ENCODE measurements at regions of chrX and their contacts with region 1.

Region 1: DNA sequence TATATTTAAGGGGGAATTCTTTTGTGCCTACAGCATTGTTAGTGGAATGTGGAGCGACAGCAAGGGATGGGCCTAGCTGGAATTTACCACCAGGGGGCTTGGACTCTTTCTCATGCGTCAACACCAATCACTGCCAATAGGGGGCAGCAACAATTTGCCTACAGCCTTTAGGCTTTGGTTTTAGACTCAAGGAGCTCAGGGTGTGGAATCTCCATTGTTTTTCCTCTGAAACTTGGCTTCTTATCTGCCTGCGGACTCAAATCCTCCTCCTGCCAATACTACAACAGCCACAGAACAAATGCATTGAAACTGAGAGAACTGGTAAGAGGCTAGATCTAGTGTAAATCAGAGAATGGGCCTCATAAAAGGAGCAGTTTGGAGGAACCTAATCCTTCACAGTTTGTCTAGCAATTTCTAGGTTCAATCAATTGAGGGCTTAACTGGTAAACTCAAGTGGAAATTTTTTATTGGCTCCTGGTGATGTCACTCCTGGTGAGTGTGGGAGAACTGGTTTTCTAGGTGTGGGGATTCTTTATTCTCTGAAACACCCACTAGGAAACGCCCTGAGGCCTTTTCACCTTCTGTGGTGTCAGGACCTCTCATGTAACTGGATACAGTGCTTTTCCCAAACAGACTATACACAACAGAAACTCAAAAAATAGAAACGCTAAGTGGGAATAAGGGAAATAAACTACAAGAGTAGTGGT is 27.9 kb upstream of the TMSB4X start:
- DNase-seq: peak; percentile 69 to 85 (median 79)
- H3K4me3 ChIP-seq: no peak overlapping the region
- H3K4me3 Mint-ChIP-seq: peak overlapping the region in 7 of 8 donors; percentile 41 to 76 (median 64)
- H3K27ac ChIP-seq: peak overlapping the region; percentile 84
- H3K27ac Mint-ChIP-seq: peak overlapping the region; percentile 91 to 99 (median 97)
- H3K4me1 ChIP-seq: peaks cover 49% of the 10 kb centered on the region
- H3K4me1 Mint-ChIP-seq: peaks cover 37 to 58% (median 50%) of the 10 kb centered on the region in 4 donors
- H3K27me3 ChIP-seq: no peaks in the 10 kb centered on the region
- H3K27me3 Mint-ChIP-seq: no peaks in the 10 kb centered on the region

Region 2: DNA sequence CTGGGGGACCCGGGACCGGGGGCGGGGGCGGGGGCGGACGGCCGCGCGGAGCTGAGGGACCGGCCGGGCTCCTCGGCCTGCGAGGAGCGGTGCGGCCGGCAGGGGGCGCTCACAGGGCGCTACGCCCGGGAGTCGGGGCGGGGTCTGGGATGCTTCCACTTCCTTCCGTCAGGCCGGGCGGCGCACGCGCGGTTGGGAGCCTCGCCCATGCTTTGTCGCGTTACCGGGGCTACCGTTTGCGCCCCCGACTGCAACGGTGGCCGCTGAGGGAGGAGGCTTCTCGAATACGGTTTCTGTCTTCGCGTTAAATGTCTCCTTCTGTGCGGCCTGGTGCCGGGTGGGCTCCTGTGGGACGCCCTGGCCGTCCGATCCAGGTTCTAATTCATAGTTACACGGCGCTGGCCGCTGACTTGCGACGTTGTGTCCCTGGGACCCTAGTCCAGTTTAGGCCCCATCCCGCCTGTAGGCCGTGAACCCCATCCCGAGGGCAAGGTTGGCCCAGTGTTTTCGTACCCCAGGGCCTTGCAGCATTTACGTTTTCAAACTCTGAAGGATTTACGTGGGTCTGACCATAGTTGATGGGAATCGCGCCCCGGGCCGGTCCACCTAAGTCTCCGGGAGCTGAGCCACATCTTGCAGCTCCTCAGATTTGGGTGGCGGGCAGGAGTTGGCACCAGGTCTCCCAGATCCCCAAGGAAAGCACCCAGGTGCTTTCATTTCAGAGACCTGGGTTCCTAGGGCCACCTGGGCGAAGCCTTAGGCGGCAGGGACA is 1188.4 kb before region 1 on chrX:
- CTCF ChIA-PET with region 1: no interaction called
- POLR2A ChIA-PET with region 1: no interaction called
- intact Hi-C with region 1: loop called (anchors 5 kb)
- DNase-seq: peak; percentile 87 to 90 (median 89)
- H3K4me3 ChIP-seq: peak overlapping the region; percentile 56 to 58
- H3K4me3 Mint-ChIP-seq: peak overlapping the region; percentile 88 to 98 (median 94)
- H3K27ac ChIP-seq: peak overlapping the region; percentile 76
- H3K27ac Mint-ChIP-seq: peak overlapping the region; percentile 91 to 99 (median 95)
- H3K4me1 ChIP-seq: peaks cover 29% of the 10 kb centered on the region
- H3K4me1 Mint-ChIP-seq: peaks cover 14 to 46% (median 29%) of the 10 kb centered on the region in 4 donors
- H3K27me3 ChIP-seq: no peaks in the 10 kb centered on the region
- H3K27me3 Mint-ChIP-seq: no peaks in the 10 kb centered on the region

Region 3: DNA sequence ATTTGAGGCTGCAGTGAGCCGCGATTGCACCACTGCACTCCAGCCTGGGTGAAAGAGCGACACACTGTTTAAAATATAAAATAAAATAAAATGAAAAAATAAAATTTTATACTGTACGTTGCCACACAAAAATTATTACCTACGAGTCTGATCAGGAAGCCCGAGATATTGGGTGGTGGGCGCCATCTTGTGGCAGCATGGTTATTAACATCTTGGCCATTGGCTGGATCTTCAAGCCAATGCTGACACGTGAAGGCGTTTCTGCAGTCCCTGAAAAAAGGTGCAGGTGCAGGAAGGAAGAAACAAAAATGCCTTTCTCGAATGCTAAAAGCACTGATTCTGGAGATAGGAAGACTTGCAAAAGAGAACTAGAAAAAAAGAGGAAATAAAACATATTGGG is 45.5 kb before region 1 on chrX:
- CTCF ChIA-PET with region 1: no interaction called
- POLR2A ChIA-PET with region 1: no interaction called
- intact Hi-C with region 1: no loop called
- DNase-seq: peak; percentile 49 to 61 (median 54)
- H3K4me3 ChIP-seq: no peak overlapping the region
- H3K4me3 Mint-ChIP-seq: peak overlapping the region in 1 of 8 donors; percentile 57
- H3K27ac ChIP-seq: no peak overlapping the region
- H3K27ac Mint-ChIP-seq: no peak overlapping the region
- H3K4me1 ChIP-seq: no peaks in the 10 kb centered on the region
- H3K4me1 Mint-ChIP-seq: peaks cover 0 to 4% (median 2%) of the 10 kb centered on the region in 4 donors
- H3K27me3 ChIP-seq: no peaks in the 10 kb centered on the region
- H3K27me3 Mint-ChIP-seq: peaks cover 0 to 2% of the 10 kb centered on the region in 2 donors

Region 4: DNA sequence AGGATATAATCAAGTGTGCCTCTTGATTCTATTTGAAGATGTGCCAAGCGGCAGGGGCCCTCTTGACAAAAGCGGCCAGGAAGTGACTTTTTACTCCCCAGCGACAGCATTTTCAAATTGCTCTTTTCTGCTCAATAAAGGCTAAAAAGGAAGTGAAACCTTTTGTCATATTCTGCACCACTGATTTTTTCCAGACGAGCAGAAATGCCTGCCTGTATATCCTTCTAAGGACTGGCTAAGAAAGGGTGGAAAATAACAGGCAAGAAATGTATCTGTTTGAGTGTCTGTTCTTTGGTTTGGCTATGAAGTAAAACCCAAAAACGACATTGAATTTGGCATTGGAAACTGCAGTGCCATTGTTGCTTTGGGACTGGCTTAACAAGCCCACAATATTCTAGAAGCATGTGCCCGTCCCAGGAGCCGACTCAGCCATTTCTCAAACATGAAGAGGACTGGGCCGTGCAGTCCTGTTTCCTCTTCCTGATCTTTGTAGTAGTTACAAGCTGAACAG is 53.4 kb after region 1 on chrX:
- CTCF ChIA-PET with region 1: interaction called, 9 read pairs
- POLR2A ChIA-PET with region 1: interaction called, 23 read pairs
- intact Hi-C with region 1: loop called (anchors 2 kb)
- DNase-seq: peak; percentile 55 to 68 (median 59)
- H3K4me3 ChIP-seq: no peak overlapping the region
- H3K4me3 Mint-ChIP-seq: peak overlapping the region; percentile 71 to 88 (median 78)
- H3K27ac ChIP-seq: peak overlapping the region; percentile 72
- H3K27ac Mint-ChIP-seq: peak overlapping the region; percentile 91 to 98 (median 94)
- H3K4me1 ChIP-seq: peaks cover 91% of the 10 kb centered on the region
- H3K4me1 Mint-ChIP-seq: peaks cover 45 to 84% (median 69%) of the 10 kb centered on the region in 4 donors
- H3K27me3 ChIP-seq: no peaks in the 10 kb centered on the region
- H3K27me3 Mint-ChIP-seq: no peaks in the 10 kb centered on the region

Region 5: GRCh38 chrX:13029341-13029740 is 82.3 kb after region 1 on chrX:
- CTCF ChIA-PET with region 1: interaction called, 3 read pairs
- POLR2A ChIA-PET with region 1: interaction called, 13 read pairs
- intact Hi-C with region 1: loop called (anchors 1 kb)
- DNase-seq: no peak
- H3K4me3 ChIP-seq: no peak overlapping the region
- H3K4me3 Mint-ChIP-seq: peak overlapping the region; percentile 33 to 79 (median 65)
- H3K27ac ChIP-seq: peak overlapping the region; percentile 42
- H3K27ac Mint-ChIP-seq: peak overlapping the region; percentile 74 to 94 (median 90)
- H3K4me1 ChIP-seq: peaks cover 72% of the 10 kb centered on the region
- H3K4me1 Mint-ChIP-seq: peaks cover 45 to 76% (median 61%) of the 10 kb centered on the region in 4 donors
- H3K27me3 ChIP-seq: no peaks in the 10 kb centered on the region
- H3K27me3 Mint-ChIP-seq: no peaks in the 10 kb centered on the region

Region 6: DNA sequence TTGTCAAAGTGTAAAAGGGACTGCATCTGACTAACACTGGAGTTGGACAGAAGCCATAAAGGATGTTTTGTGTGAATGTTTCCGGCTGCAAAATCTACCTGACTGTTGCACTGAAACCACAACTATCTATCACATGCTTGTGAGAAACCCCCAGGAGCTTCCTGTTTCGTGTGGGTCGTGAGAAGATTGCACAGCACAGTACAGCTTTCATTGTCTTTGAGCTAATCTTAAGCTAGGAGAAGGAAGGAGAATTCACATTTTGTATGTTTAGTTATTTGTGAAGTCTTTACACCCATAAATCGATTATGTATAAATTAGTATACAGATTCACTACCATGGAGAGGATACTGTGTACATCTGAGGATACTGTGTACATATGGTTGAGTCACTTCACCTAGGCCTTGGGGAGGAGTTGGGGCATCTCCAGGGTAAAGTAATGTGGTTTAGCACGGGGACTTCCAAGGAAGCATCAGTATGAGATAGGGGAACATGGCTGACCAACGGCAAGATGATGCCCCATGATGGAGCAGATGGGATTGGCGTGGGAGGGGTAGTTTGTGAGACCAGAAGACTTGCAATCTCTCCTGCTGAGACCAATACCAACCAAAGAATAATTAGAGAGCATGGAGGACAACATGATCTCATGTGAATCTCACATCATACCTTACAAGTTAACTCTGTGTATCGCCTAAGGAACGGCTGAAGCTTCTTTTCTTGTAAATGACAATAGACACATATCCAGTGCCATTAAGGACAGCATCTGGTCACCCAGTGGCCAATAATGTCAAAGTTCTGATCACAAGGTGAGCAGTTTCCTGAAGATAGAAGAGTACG is 140.5 kb after region 1 on chrX:
- CTCF ChIA-PET with region 1: interaction called, 210 read pairs
- POLR2A ChIA-PET with region 1: interaction called, 284 read pairs
- intact Hi-C with region 1: loop called (anchors 1 kb)
- DNase-seq: peak; percentile 86 to 93 (median 90)
- H3K4me3 ChIP-seq: peak overlapping the region in 1 of 2 donors; percentile 21
- H3K4me3 Mint-ChIP-seq: peak overlapping the region; percentile 72 to 87 (median 76)
- H3K27ac ChIP-seq: peak overlapping the region; percentile 94
- H3K27ac Mint-ChIP-seq: peak overlapping the region; percentile 95 to 99 (median 97)
- H3K4me1 ChIP-seq: peaks cover 98% of the 10 kb centered on the region
- H3K4me1 Mint-ChIP-seq: peaks cover 54 to 99% (median 77%) of the 10 kb centered on the region in 4 donors
- H3K27me3 ChIP-seq: no peaks in the 10 kb centered on the region
- H3K27me3 Mint-ChIP-seq: no peaks in the 10 kb centered on the region

Region 7: DNA sequence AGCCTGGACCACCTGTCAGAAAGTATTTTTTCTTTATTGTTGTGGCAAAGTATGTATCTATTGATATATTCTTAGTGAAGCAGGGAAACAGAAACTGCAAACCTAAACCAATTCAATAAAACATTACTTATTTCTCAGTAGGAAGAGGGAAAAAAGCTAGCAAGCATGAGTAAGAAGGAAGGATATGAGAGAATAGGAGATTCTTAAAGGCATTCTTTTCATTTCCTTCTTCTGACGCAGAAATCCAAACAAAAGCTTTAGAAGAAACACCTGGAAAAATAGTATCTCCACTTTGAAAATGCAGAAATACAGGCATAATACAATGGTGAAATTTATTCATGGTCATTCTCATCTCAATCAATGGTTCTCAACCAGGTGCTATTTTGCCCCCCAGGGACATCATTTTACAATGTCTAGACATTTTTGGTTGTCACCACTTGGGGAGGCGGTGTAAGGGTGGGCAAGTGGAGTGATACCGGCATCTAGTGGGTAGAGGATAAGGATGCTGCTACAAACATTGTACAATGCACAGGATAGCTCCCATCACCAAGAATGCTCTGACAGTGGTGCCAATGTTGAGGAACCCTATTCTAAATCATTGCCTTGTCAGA is 394.6 kb after region 1 on chrX:
- CTCF ChIA-PET with region 1: interaction called, 4 read pairs
- POLR2A ChIA-PET with region 1: no interaction called
- intact Hi-C with region 1: loop called (anchors 5 kb)
- DNase-seq: no peak
- H3K4me3 ChIP-seq: no peak overlapping the region
- H3K4me3 Mint-ChIP-seq: no peak overlapping the region
- H3K27ac ChIP-seq: no peak overlapping the region
- H3K27ac Mint-ChIP-seq: no peak overlapping the region
- H3K4me1 ChIP-seq: no peaks in the 10 kb centered on the region
- H3K4me1 Mint-ChIP-seq: no peaks in the 10 kb centered on the region
- H3K27me3 ChIP-seq: no peaks in the 10 kb centered on the region
- H3K27me3 Mint-ChIP-seq: no peaks in the 10 kb centered on the region

Region 8: GRCh38 chrX:13646154-13646549 is 699.2 kb after region 1 on chrX:
- CTCF ChIA-PET with region 1: interaction called, 4 read pairs
- POLR2A ChIA-PET with region 1: no interaction called
- intact Hi-C with region 1: loop called (anchors 5 kb)
- DNase-seq: no peak
- H3K4me3 ChIP-seq: no peak overlapping the region
- H3K4me3 Mint-ChIP-seq: peak overlapping the region in 1 of 8 donors; percentile 9
- H3K27ac ChIP-seq: no peak overlapping the region
- H3K27ac Mint-ChIP-seq: peak overlapping the region in 2 of 7 donors; percentile 32 to 57
- H3K4me1 ChIP-seq: peaks cover 10% of the 10 kb centered on the region
- H3K4me1 Mint-ChIP-seq: peaks cover 4 to 16% (median 8%) of the 10 kb centered on the region in 4 donors
- H3K27me3 ChIP-seq: no peaks in the 10 kb centered on the region
- H3K27me3 Mint-ChIP-seq: no peaks in the 10 kb centered on the region

Measured in CD4-positive, alpha-beta memory T cell (primary cell).